GM12878 (cell line): ENCODE measurements at regions of chrX and their contacts with region 1.

Region 1: GRCh38 chrX:41796577-41796976 is 72.6 kb downstream of the GPR82 start:
- DNase-seq: no peak
- ATAC-seq: peak; percentile 41
- H3K4me3 ChIP-seq: no peak overlapping the region
- H3K27ac ChIP-seq: no peak overlapping the region
- H3K4me1 ChIP-seq: no peaks in the 10 kb centered on the region
- H3K27me3 ChIP-seq: no peaks in the 10 kb centered on the region
- CTCF ChIP-seq: no peak
- EP300 ChIP-seq: 0 out of 4 replicates have a peak, but pooled peaks of 1 of the 2 experiments have one; percentile 31
- POLR2A ChIP-seq: no peak
- RAD21 ChIP-seq: no peak

Region 2: GRCh38 chrX:41868392-41868977 is 71.9 kb after region 1 on chrX:
- CTCF ChIA-PET with region 1: no interaction called
- POLR2A ChIA-PET with region 1: no interaction called
- RAD21 ChIA-PET with region 1: interaction called, 14 read pairs
- SMC1A ChIA-PET with region 1: interaction called, 3 read pairs
- in situ Hi-C with region 1: no loop called
- intact Hi-C with region 1: no loop called
- DNase-seq: no peak
- ATAC-seq: peak; percentile 66
- H3K4me3 ChIP-seq: no peak overlapping the region
- H3K27ac ChIP-seq: no peak overlapping the region
- H3K4me1 ChIP-seq: peaks cover 3% of the 10 kb centered on the region; the same call in 1 of the 2 replicates
- H3K27me3 ChIP-seq: no peaks in the 10 kb centered on the region
- CTCF ChIP-seq: no peak
- EP300 ChIP-seq: no peak
- POLR2A ChIP-seq: no peak
- RAD21 ChIP-seq: no peak

Region 3: DNA sequence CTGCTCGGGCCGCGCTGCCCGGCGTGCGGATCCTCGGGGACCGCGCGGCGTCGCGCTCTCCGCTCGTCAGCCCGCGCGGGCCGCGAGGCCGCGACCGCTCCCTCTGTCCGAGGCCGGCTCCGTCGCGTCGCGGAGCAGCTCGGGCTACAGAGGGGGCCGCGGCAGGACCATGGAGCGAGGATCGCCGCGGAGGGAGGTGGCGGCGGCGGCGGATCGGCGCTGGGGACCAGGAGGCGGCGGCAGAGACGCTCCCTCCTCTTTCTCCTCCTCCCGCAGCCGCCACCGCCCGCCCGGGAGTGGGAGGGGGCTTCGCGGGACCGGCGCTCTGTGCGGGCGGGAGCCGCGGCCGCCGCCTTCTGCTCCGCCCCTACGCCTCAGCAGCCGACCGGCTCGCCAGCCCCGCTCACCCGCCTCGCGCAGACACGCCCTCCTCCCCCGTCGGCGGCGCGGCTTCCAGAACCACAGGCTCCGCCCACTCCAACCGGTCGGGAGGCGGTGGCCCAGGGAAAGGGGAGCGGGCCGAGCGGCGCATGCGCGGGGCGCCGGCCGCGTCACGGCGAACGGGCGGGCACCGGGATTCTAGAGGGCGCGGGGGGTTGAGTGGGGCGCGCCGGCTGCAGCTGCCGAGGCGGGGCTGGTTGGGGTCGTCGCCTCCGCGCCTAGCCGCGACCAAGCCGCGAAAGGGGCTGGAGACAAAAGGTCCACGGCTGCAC is 126.8 kb after region 1 on chrX and contains the start of gene CASK:
- CTCF ChIA-PET with region 1: interaction called, 14 read pairs
- POLR2A ChIA-PET with region 1: interaction called, 5 read pairs
- RAD21 ChIA-PET with region 1: interaction called, 76 read pairs
- SMC1A ChIA-PET with region 1: interaction called, 38 read pairs
- in situ Hi-C with region 1: no loop called
- intact Hi-C with region 1: loop called (anchors 1 kb)
- DNase-seq: peak; percentile 51
- ATAC-seq: peak; percentile 81
- H3K4me3 ChIP-seq: peak within 1 kb of the TSS; percentile 71
- H3K27ac ChIP-seq: peak within 1 kb of the TSS; percentile 38
- H3K4me1 ChIP-seq: no peaks in the 10 kb centered on the region
- H3K27me3 ChIP-seq: no peaks in the 10 kb centered on the region; a peak in 1 of 4 replicates
- CTCF ChIP-seq: 0 out of 6 replicates have a peak, but pooled peaks of 1 of the 3 experiments have one; percentile 4
- EP300 ChIP-seq: no peak
- POLR2A ChIP-seq: no peak
- RAD21 ChIP-seq: no peak
- polyA plus RNA-seq, gene CASK: 2.6 to 3.1 TPM

Region 4: DNA sequence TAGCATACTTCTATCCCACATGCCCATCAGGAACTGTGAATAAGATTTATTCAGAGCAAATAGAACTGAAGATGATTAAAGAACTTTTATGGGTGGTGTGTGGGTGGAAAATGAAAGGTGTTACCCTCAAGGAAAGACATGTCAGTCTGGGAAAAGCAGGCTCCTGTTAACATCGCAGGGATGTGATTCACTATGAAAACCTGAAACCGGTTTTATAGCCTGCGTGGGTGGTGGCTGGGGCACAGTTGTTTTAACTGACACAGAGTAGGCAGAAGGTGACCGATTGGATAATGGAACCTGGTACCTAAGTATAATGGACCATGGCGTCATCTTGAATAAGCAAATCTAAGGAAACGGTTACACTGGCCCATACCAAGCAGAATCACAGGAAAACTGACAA is 188.1 kb after region 1 on chrX:
- CTCF ChIA-PET with region 1: no interaction called
- POLR2A ChIA-PET with region 1: no interaction called
- RAD21 ChIA-PET with region 1: no interaction called
- SMC1A ChIA-PET with region 1: no interaction called
- in situ Hi-C with region 1: no loop called
- intact Hi-C with region 1: no loop called
- DNase-seq: no peak
- ATAC-seq: no peak
- H3K4me3 ChIP-seq: no peak overlapping the region
- H3K27ac ChIP-seq: no peak overlapping the region
- H3K4me1 ChIP-seq: no peaks in the 10 kb centered on the region
- H3K27me3 ChIP-seq: no peaks in the 10 kb centered on the region
- CTCF ChIP-seq: no peak
- EP300 ChIP-seq: no peak
- POLR2A ChIP-seq: no peak
- RAD21 ChIP-seq: no peak

Region 5: GRCh38 chrX:42276982-42277690 is 480.6 kb after region 1 on chrX:
- CTCF ChIA-PET with region 1: no interaction called
- POLR2A ChIA-PET with region 1: no interaction called
- RAD21 ChIA-PET with region 1: no interaction called
- SMC1A ChIA-PET with region 1: interaction called, 4 read pairs
- in situ Hi-C with region 1: no loop called
- intact Hi-C with region 1: loop called (anchors 10 kb)
- DNase-seq: peak; percentile 8
- ATAC-seq: peak; percentile 93
- H3K4me3 ChIP-seq: no peak overlapping the region
- H3K27ac ChIP-seq: no peak overlapping the region
- H3K4me1 ChIP-seq: no peaks in the 10 kb centered on the region
- H3K27me3 ChIP-seq: no peaks in the 10 kb centered on the region
- CTCF ChIP-seq: no peak
- EP300 ChIP-seq: no peak
- POLR2A ChIP-seq: no peak
- RAD21 ChIP-seq: no peak

Region 6: DNA sequence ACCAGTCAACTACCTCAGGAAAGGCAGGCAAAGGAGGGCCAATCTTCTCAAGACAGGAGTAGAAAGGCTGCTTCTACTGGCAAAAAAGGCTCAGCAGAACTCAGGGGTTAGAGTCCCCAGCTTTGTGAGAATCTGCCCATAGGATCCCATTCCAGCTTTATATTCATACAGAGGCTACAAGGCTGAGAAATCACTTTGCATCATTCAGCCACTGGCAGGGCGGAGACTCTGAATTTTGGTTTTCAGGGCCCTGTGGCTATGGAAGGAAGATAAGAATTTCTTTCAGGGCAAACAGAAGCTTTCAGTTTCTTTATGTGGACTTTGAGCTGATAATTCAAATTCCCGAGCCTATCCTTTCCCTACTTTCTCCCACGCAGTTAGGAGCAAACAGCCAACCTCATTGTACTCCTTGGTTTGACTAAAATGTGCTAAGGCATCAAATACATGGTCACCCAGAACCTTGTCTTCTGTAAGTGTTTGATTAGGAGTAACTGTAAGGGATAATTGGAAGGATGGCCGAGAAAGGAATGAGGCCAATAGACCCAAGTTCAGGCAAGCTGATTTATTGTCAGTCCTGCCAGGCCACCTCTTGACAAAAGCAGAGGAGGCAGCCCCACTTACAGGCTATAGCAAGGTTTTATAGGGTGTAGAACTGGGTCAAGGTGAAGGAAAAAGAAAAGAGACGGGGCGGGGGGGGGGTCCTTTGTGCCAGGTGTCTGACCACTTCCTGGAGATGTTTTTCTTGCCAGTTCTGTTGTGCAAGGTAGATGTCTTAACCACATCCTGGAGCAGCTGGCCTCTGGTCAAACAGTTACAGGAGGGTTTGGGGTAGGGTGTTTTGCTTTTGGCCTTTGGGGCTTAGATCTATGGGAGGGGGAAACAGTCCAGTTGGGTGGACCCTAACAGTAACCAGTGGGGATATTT is 1146.7 kb after region 1 on chrX:
- CTCF ChIA-PET with region 1: interaction called, 7 read pairs
- POLR2A ChIA-PET with region 1: no interaction called
- RAD21 ChIA-PET with region 1: interaction called, 5 read pairs
- SMC1A ChIA-PET with region 1: interaction called, 7 read pairs
- in situ Hi-C with region 1: loop called (anchors 10 kb)
- intact Hi-C with region 1: no loop called
- DNase-seq: no peak
- ATAC-seq: peak; percentile 90
- H3K4me3 ChIP-seq: no peak overlapping the region
- H3K27ac ChIP-seq: peak overlapping the region; percentile 82
- H3K4me1 ChIP-seq: peaks cover 8% of the 10 kb centered on the region
- H3K27me3 ChIP-seq: no peaks in the 10 kb centered on the region
- CTCF ChIP-seq: no peak
- EP300 ChIP-seq: peak; percentile 31 to 67; a peak in 1 of 4 replicates
- POLR2A ChIP-seq: no peak
- RAD21 ChIP-seq: peak; percentile 29; the same call in 1 of the 2 replicates

Region 7: GRCh38 chrX:43750248-43750676 is 1953.7 kb after region 1 on chrX:
- CTCF ChIA-PET with region 1: no interaction called
- POLR2A ChIA-PET with region 1: no interaction called
- RAD21 ChIA-PET with region 1: no interaction called
- SMC1A ChIA-PET with region 1: no interaction called
- in situ Hi-C with region 1: no loop called
- intact Hi-C with region 1: loop called (anchors 5 kb)
- DNase-seq: no peak
- ATAC-seq: peak; percentile 95
- H3K4me3 ChIP-seq: no peak overlapping the region
- H3K27ac ChIP-seq: no peak overlapping the region
- H3K4me1 ChIP-seq: no peaks in the 10 kb centered on the region
- H3K27me3 ChIP-seq: no peaks in the 10 kb centered on the region; a peak in 1 of 4 replicates
- CTCF ChIP-seq: peak; percentile 45 to 65 (median 51); a peak in 5 of 6 replicates
- EP300 ChIP-seq: no peak
- POLR2A ChIP-seq: no peak
- RAD21 ChIP-seq: peak; percentile 78